RWPE1 (cell line): ENCODE measurements at regions of chr6 and their contacts with region 1.

Region 1: DNA sequence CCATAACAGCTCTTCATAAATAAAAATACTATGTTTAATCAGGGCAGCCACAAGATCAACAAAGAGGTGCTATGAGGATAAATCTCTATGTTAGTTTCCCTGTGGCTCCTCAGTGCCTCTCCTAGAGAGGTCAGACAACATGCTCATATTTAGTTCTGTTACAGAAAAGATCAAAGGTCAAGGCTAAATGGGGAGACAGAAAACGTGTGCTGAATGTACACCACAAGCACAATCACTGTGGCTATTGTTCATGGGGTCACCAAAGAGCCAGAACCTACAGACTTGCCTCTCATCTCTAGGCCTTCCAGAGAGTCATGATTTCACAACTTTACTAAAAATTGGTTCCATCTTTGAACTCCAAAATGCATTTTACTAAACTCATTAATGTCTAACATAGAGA is 409.8 kb downstream of the HACE1 start:
- DNase-seq: no peak
- H3K27ac ChIP-seq: no peak overlapping the region
- CTCF ChIP-seq: no peak

Region 2: DNA sequence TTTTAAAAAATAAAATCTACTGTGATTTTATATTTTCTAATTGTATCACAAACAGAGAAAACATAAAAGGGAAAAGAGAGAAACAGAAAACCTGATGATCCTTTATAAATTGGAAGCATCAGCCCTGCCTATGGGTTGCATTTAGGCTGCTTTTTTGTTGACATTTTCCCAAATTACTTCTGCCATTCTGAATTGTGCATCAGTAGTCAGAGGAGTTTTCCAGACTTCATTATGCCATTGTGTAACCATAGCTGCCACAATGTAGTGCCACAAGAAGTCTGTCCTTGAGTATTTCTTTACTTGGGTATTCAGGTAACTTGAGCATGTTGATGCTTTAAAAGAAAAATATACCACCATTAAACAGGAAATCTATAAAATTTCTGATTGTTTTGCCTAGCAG is 279.5 kb after region 1 on chr6:
- CTCF ChIA-PET with region 1: interaction called, 16 read pairs
- POLR2A ChIA-PET with region 1: no interaction called
- DNase-seq: no peak
- H3K27ac ChIP-seq: no peak overlapping the region
- CTCF ChIP-seq: no peak